ENCODE measurements at regions of chr10 and their contacts with region 1.

Region 1: DNA sequence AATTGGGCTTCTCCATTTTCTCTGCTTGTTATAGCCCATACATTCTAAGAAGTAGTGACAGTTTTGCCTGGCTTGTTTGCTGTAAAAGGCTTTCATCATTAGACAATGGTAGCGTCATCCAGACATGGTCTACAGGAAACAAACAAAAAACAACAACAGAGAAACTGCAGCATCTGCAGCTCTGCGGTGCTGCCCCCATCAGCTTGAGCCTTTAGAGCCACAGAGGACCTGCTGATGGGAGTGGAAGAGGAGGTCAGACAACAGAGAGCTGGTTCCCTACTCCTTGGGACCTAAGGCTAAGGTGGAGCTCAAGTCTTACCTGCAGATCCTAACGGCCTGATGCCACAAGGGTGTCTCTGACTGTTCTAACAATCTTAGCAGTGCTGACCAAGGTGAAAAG is 3.1 kb downstream of the INA start:
- DNase-seq: no peak
- ATAC-seq: no peak
- H3K4me3 ChIP-seq: no peak overlapping the region
- H3K27ac ChIP-seq: no peak overlapping the region
- H3K4me1 ChIP-seq: peaks cover 4% of the 10 kb centered on the region; the same call in 1 of the 2 replicates
- H3K27me3 ChIP-seq: no peaks in the 10 kb centered on the region
- CTCF ChIP-seq: no peak

Region 2: DNA sequence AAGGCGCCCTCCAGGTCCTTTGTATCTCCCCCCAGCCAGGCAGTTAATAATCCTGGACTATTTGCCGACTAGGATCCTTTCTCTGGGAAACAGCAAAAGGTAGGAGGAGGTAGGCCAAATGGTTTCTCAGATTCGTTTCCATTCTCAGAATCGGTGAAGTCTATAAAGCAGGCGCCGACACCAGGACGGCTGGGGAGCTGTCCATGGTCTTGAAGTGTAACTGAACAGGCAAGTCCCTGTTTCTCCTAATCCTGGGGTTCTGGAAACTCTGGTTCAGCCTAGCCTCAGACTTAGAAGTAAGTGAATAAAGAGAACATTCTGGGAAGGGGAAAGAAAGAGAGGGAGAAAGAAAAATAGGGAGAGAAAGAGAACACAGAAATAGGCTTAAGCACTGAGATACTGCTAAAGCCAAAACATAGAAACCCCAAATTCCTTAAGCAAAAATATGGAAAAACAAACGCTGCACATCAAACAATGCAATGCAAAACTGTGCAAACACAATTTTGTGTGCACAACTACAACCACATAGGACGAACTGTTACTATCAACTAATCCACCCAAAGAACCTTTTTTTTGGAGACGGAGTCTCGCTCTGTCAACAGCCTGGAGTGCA is 14.2 kb before region 1 on chr10:
- CTCF ChIA-PET with region 1: no interaction called
- POLR2A ChIA-PET with region 1: no interaction called
- intact Hi-C with region 1: loop called (anchors 1 kb)
- DNase-seq: peak; percentile 63
- ATAC-seq: 0 out of 2 replicates have a peak, but pooled peaks have one; percentile 48
- H3K4me3 ChIP-seq: no peak overlapping the region
- H3K27ac ChIP-seq: no peak overlapping the region
- H3K4me1 ChIP-seq: no peaks in the 10 kb centered on the region
- H3K27me3 ChIP-seq: no peaks in the 10 kb centered on the region
- CTCF ChIP-seq: no peak